ENCODE measurements at regions of chr1 and their contacts with region 1.

Region 1: GRCh38 chr1:26233903-26234643 is at the start of gene CEP85:
- DNase-seq: peak; percentile 100
- ATAC-seq: peak; percentile 87
- H3K4me3 ChIP-seq: peak within 1 kb of the TSS; percentile 62 to 93 (median 81)
- H3K4me3 Mint-ChIP-seq: peak within 1 kb of the TSS; percentile 97
- H3K27ac ChIP-seq: peak within 1 kb of the TSS; percentile 59 to 86
- H3K27ac Mint-ChIP-seq: peak within 1 kb of the TSS; percentile 95
- H3K4me1 ChIP-seq: peaks cover 11 to 16% of the 10 kb centered on the region in 2 donors
- H3K4me1 Mint-ChIP-seq: peaks cover 27% of the 10 kb centered on the region
- H3K27me3 ChIP-seq: no peaks in the 10 kb centered on the region
- H3K27me3 Mint-ChIP-seq: no peaks in the 10 kb centered on the region
- CTCF ChIP-seq: peak; percentile 90
- total RNA-seq, gene CEP85: 16.2 and 16.9 TPM in 2 replicates

Region 2: DNA sequence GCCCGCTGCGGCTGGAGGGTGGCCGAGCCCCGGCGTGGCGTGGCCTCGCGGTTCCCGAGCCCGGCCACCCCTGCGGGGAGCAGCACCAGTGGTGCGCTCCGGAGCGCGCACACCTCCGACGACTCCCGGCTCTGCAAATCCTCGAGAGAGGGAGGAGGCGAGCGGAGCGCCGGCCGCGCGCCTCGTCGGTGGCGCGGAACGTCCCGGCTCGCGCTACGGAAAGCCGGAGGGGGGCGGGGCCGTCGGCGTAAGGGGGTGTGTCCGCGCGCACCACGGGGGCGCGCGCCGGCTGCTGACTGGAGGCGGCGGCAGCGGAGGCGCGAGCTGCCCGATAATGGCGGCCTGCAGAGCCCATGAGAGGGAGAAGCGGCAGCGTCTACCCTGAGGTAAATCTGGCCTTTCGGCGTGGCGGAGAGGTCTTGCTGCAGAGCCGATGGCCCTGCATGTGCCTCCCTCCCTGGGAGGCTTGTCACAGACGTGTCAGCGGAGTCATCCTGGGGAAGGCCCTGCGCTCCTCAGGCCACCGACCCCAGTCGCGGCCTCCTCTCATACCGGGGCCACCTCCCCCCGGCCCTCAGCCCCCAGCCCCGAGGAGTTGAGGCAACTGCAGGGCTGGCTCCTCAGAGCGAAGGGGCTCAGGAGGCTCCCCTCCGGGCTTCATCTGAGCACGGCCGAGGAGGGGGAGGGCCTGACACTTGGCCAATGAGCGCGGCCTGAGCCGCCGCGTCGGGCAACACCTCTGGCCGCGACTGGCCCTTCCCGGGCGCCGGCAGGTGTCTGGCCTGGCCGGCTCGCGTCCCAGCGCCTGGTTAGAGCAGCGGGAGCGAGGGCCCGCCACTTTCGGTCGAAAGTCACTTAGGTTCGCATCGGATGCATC is 122.3 kb before region 1 on chr1 and contains the start of gene PDIK1L:
- CTCF ChIA-PET with region 1: interaction called, 4 read pairs
- POLR2A ChIA-PET with region 1: no interaction called
- intact Hi-C with region 1: loop called (anchors 1 kb)
- DNase-seq: peak; percentile 97
- ATAC-seq: peak; percentile 83
- H3K4me3 ChIP-seq: peak within 1 kb of the TSS; percentile 65 to 95 (median 94)
- H3K4me3 Mint-ChIP-seq: peak within 1 kb of the TSS; percentile 93
- H3K27ac ChIP-seq: peak within 1 kb of the TSS; percentile 60 to 81
- H3K27ac Mint-ChIP-seq: peak within 1 kb of the TSS; percentile 94
- H3K4me1 ChIP-seq: peaks cover 12 to 17% of the 10 kb centered on the region in 2 donors
- H3K4me1 Mint-ChIP-seq: peaks cover 16% of the 10 kb centered on the region
- H3K27me3 ChIP-seq: no peaks in the 10 kb centered on the region
- H3K27me3 Mint-ChIP-seq: no peaks in the 10 kb centered on the region
- CTCF ChIP-seq: no peak
- total RNA-seq, gene PDIK1L: 15.2 and 17.3 TPM in 2 replicates

Region 3: DNA sequence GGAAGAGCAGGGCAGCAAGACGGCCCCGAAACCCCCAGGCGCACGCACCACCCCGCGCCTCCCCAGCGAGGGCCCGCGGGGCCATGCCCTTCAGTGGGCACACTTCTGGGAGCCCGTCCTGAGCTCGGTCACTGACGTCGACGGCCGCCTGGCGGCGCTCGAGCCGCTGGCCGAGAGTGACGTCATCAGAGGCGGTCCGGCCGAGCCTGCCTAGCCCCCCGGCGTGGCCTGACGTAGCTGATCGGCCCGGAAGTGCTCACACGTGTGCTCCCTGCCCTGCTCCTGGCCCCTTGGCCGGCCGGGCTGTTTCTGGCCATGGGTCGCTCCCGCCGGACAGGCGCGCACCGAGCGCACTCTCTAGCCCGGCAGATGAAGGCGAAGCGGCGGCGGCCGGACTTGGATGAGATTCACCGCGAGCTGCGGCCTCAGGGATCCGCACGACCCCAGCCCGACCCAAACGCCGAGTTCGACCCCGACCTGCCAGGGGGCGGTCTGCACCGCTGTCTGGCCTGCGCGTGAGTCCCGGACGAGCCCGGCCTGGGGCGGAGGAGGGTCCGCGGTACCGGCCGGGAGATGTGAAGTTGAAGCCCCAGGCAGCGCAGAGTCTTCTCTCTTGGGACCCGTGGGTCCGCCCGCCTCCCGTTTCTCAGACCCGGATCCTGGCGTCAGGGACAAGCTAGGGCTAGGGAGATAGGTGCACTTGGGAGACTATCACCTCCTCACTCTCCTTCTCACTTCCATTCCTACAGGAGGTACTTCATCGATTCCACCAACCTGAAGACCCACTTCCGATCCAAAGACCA is 64.2 kb before region 1 on chr1 and contains the start of gene ZNF593:
- CTCF ChIA-PET with region 1: interaction called, 28 read pairs
- POLR2A ChIA-PET with region 1: interaction called, 5 read pairs
- intact Hi-C with region 1: loop called (anchors 1 kb)
- DNase-seq: peak; percentile 92
- ATAC-seq: peak; percentile 97
- H3K4me3 ChIP-seq: peak within 1 kb of the TSS; percentile 58 to 94 (median 86)
- H3K4me3 Mint-ChIP-seq: peak within 1 kb of the TSS; percentile 93
- H3K27ac ChIP-seq: peak within 1 kb of the TSS; percentile 38 to 91
- H3K27ac Mint-ChIP-seq: peak within 1 kb of the TSS; percentile 85
- H3K4me1 ChIP-seq: peaks cover 7 to 15% of the 10 kb centered on the region in 2 donors
- H3K4me1 Mint-ChIP-seq: peaks cover 15% of the 10 kb centered on the region
- H3K27me3 ChIP-seq: no peaks in the 10 kb centered on the region
- H3K27me3 Mint-ChIP-seq: no peaks in the 10 kb centered on the region
- CTCF ChIP-seq: peak; percentile 79
- total RNA-seq, gene ZNF593: 10.7 and 13.5 TPM in 2 replicates

Region 4: DNA sequence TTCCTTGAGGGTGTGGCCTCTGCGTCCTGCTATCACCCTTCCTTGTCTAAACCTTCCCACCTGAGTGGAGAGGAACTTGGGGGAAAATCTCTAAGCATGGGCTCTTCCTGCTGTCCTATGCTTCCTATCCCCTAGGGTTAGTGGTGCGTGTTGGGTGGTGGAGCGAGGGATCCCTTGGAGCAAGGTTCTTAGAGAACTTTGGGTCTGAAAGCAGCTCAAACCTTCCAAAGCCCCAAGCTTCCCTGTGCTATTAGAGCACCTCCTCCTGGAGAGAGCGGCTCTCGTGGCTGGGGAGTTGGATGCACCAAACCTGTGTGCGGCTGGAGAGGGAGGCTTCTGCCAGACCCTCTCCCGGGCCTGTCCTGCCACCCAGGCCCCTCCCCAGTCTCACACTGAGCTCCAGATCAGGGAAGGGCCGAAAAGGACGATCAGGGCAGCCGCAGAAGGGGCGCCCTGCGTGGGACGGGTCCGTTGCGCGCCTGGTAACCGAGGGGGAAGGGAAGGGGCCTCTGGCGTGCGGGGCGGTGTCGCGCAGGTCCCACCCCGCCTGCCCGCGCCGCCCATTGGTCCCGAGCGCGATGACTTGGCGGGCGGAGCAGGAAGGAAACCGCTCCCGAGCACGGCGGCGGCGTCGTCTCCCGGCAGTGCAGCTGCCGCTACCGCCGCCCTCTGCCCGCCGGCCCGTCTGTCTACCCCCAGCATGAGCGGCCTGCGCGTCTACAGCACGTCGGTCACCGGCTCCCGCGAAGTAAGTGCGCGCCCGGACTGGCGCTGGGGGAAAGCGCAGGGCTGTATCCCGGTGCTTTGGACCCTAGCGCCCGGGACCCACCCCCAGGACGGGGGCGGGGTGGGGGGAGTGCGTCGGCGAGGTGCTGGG is 45.6 kb after region 1 on chr1 and contains the start of gene SH3BGRL3:
- CTCF ChIA-PET with region 1: interaction called, 25 read pairs
- POLR2A ChIA-PET with region 1: interaction called, 17 read pairs
- intact Hi-C with region 1: loop called (anchors 1 kb)
- DNase-seq: peak; percentile 87
- ATAC-seq: peak; percentile 68
- H3K4me3 ChIP-seq: peak within 1 kb of the TSS; percentile 75 to 93 (median 90)
- H3K4me3 Mint-ChIP-seq: peak within 1 kb of the TSS; percentile 92
- H3K27ac ChIP-seq: peak within 1 kb of the TSS; percentile 73 to 81
- H3K27ac Mint-ChIP-seq: peak within 1 kb of the TSS; percentile 91
- H3K4me1 ChIP-seq: peaks cover 55 to 83% of the 10 kb centered on the region in 2 donors
- H3K4me1 Mint-ChIP-seq: peaks cover 74% of the 10 kb centered on the region
- H3K27me3 ChIP-seq: no peaks in the 10 kb centered on the region
- H3K27me3 Mint-ChIP-seq: no peaks in the 10 kb centered on the region
- CTCF ChIP-seq: no peak
- total RNA-seq, gene SH3BGRL3: 230 and 232 TPM in 2 replicates

Region 5: GRCh38 chr1:26336477-26337205 is 102.6 kb after region 1 on chr1:
- CTCF ChIA-PET with region 1: interaction called, 6 read pairs
- POLR2A ChIA-PET with region 1: no interaction called
- intact Hi-C with region 1: loop called (anchors 1 kb)
- DNase-seq: peak; percentile 91
- ATAC-seq: peak; percentile 96
- H3K4me3 ChIP-seq: peak overlapping the region in 4 of 5 experiments; percentile 56 to 72 (median 65)
- H3K4me3 Mint-ChIP-seq: peak overlapping the region; percentile 95
- H3K27ac ChIP-seq: no peak overlapping the region
- H3K27ac Mint-ChIP-seq: peak overlapping the region; percentile 61
- H3K4me1 ChIP-seq: peaks cover 8 to 14% of the 10 kb centered on the region in 2 donors
- H3K4me1 Mint-ChIP-seq: peaks cover 13% of the 10 kb centered on the region
- H3K27me3 ChIP-seq: no peaks in the 10 kb centered on the region
- H3K27me3 Mint-ChIP-seq: no peaks in the 10 kb centered on the region
- CTCF ChIP-seq: no peak

Region 6: GRCh38 chr1:26408604-26409003 is 174.5 kb after region 1 on chr1:
- CTCF ChIA-PET with region 1: interaction called, 3 read pairs
- POLR2A ChIA-PET with region 1: no interaction called
- intact Hi-C with region 1: loop called (anchors 1 kb)
- DNase-seq: peak; percentile 85
- ATAC-seq: peak; percentile 92
- H3K4me3 ChIP-seq: no peak overlapping the region
- H3K4me3 Mint-ChIP-seq: no peak overlapping the region
- H3K27ac ChIP-seq: no peak overlapping the region
- H3K27ac Mint-ChIP-seq: peak overlapping the region; percentile 41
- H3K4me1 ChIP-seq: peaks cover 17 to 18% of the 10 kb centered on the region in 2 donors
- H3K4me1 Mint-ChIP-seq: peaks cover 15% of the 10 kb centered on the region
- H3K27me3 ChIP-seq: peaks cover 0 to 55% (median 36%) of the 10 kb centered on the region in 4 experiments
- H3K27me3 Mint-ChIP-seq: peaks cover 63% of the 10 kb centered on the region
- CTCF ChIP-seq: no peak

Region 7: GRCh38 chr1:26744075-26744959 is 510.2 kb after region 1 on chr1:
- CTCF ChIA-PET with region 1: no interaction called
- POLR2A ChIA-PET with region 1: no interaction called
- intact Hi-C with region 1: no loop called
- DNase-seq: peak; percentile 88
- ATAC-seq: peak; percentile 95
- H3K4me3 ChIP-seq: peak overlapping the region; percentile 7 to 51 (median 39)
- H3K4me3 Mint-ChIP-seq: peak overlapping the region; percentile 80
- H3K27ac ChIP-seq: peak overlapping the region; percentile 75 to 96
- H3K27ac Mint-ChIP-seq: peak overlapping the region; percentile 92
- H3K4me1 ChIP-seq: peaks cover 82 to 88% of the 10 kb centered on the region in 2 donors
- H3K4me1 Mint-ChIP-seq: peaks cover 83% of the 10 kb centered on the region
- H3K27me3 ChIP-seq: no peaks in the 10 kb centered on the region
- H3K27me3 Mint-ChIP-seq: no peaks in the 10 kb centered on the region
- CTCF ChIP-seq: no peak